Head of caudate nucleus (tissue), 42 donors: ENCODE measurements at regions of chr12 and their contacts with region 1.

Region 1: GRCh38 chr12:52023182-52023975 is 16.6 kb downstream of the TAMALIN start:
- DNase-seq: peak; percentile 73 to 95 (median 89)

Region 2: DNA sequence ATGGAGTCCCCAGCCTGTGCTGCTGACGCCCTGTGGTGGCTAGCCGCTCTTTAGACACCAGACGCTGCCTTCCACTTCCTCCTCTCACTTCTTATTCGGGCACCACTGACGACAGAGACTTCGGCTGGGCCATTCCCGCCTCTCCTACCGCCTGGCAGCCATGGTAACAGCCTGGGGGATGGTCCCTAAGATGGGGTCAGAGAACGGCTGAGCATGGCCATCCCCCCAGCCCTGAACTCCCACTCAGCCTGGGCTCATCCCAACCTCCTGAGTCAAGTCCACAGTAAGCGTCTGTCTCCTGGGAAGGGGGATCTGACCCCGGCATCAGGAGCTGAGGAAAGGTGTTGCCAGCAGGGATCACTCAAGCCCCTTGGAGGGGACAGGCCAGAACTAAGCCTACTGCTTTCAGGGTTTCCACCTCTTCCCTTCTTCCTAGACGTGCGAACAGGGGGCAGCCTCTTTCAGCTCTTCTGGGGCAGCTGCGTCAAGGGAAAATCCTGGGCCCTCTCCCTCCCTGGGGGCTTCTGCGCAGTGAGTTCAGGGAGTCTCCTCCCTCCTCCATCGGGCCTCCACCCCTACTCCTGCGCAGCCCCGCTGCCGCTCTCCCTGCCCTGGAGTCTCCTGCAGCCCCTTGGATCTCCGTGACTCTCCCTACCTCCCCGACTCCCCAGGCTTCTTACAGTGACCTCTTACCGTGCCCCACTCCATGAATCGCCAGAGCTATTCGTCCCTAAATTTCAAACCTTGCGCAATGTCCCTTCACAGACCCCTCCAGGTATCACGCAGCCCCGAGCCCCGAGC is 17.3 kb before region 1 on chr12:
- intact Hi-C with region 1: loop called (anchors 1 kb)
- DNase-seq: peak in 20 of 42 donors; percentile 46 to 75 (median 57)

Region 3: GRCh38 chr12:52082988-52083637 is 59.7 kb after region 1 on chr12:
- intact Hi-C with region 1: loop called (anchors 2 kb)
- DNase-seq: peak in 41 of 42 donors; percentile 44 to 88 (median 75)

Region 4: DNA sequence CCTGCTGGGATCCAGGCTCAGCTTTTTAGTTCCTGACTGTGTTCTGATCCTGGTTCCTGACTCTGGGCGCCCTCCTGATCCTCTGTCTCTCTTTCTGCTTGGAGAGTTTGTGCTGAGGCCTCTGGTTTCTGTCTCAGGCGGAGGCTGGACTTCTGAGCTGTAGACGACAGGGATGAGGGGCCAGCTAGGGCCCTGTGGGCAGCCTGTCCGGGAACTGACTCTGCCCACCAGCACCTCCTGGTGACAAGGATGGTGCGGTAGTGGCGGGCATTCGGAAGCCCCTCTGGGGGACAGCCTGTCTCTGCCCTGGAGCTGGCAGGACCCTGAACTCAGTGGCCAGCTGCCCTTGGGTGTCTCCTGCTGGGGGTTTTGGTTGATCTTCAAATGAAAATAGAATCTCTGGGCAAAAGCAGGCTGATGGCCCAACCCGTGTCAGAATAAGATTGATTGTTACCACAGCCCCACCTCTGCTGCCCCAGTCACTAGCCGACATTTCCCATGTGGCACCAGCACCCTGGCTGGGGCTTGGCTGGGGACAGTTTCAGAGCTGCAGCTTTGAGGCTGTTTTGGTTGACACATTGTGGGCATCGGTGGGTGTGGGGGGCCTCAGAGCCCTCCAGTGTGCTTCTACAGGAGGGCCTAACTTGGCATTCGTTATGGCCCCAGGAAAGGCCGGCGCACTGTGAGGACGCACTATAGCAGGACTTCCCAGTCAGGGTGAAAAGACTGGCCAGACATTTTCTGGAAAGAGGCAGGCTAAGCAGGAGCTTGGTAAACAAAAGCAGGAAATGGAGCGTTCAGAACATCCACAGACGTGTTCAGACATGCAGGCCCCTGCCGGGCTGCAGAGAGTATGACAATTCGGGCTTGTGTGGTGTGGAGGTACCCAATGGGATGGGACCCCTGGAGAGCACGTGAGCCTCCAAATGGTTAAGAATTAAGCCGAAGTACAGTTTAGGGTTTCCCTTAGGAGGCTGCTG is 152.3 kb after region 1 on chr12:
- intact Hi-C with region 1: no loop called
- DNase-seq: no peak